PC-3 (cell line): ENCODE measurements at regions of chr11 and their contacts with region 1.

Region 1: GRCh38 chr11:34174412-34175041 is 69.1 kb downstream of the NAT10 start:
- DNase-seq: peak; percentile 76
- ATAC-seq: peak; percentile 100
- H3K4me3 ChIP-seq: peak overlapping the region; percentile 58; the same call in 1 of the 2 replicates
- H3K27ac ChIP-seq: no peak overlapping the region
- H3K4me1 ChIP-seq: peaks cover 11% of the 10 kb centered on the region; the same call in 1 of the 2 replicates
- H3K27me3 ChIP-seq: no peaks in the 10 kb centered on the region
- CTCF ChIP-seq: peak; percentile 79

Region 2: DNA sequence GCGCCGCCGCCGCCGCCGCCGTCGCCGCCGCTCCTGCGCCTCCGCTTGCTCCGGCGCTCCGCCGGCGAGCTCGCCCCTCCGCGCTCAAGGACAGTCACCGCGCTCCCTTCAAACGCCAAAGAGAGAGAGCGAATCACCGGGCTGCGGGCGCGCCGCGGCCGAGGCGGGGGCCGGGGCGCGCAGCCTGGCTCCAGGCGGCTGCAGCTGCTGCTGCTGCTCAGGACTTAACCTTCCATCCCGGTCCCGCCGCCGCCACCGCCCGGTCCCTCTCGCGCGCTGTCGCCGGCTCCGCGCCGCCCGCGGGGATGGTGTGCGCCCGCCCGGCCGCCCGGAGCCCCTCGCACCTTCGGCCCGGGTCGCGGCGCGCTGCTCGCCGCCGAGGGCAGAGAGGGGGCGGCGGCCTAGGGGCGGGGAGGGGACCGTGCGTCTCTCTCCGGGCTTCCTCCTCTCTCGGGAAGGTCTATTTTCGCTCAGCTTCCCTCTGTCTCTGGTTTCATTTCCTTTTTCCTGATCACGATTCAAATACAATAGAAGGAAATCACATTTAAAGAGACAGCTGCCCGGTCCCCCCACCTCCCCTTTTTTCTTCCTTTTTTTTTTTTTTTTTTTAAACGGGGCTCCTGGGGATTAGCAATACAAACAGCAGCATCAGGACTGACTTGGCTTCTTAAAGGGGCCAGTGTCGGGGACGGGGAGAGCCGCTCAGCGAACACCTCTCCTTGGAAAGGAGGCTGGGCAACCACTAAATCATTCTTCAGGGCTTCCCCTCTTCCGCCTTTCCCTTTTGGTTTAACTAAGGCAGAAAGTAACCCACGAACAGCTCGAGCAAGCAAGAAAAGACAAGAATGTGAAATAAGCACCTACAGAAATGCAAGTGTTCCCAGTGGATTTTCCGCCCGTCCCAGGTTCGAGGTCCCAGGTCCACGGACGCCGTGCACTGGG is 304.8 kb before region 1 on chr11:
- CTCF ChIA-PET with region 1: no interaction called
- POLR2A ChIA-PET with region 1: no interaction called
- intact Hi-C with region 1: no loop called
- DNase-seq: peak; percentile 21
- ATAC-seq: peak; percentile 71
- H3K4me3 ChIP-seq: peak overlapping the region; percentile 77
- H3K27ac ChIP-seq: no peak overlapping the region
- H3K4me1 ChIP-seq: no peaks in the 10 kb centered on the region
- H3K27me3 ChIP-seq: peaks cover 70% of the 10 kb centered on the region
- CTCF ChIP-seq: no peak

Region 3: GRCh38 chr11:34134765-34135164 is 39.8 kb before region 1 on chr11:
- CTCF ChIA-PET with region 1: no interaction called
- POLR2A ChIA-PET with region 1: no interaction called
- intact Hi-C with region 1: no loop called
- DNase-seq: no peak
- ATAC-seq: no peak
- H3K4me3 ChIP-seq: no peak overlapping the region
- H3K27ac ChIP-seq: no peak overlapping the region
- H3K4me1 ChIP-seq: no peaks in the 10 kb centered on the region
- H3K27me3 ChIP-seq: no peaks in the 10 kb centered on the region
- CTCF ChIP-seq: no peak

Region 4: DNA sequence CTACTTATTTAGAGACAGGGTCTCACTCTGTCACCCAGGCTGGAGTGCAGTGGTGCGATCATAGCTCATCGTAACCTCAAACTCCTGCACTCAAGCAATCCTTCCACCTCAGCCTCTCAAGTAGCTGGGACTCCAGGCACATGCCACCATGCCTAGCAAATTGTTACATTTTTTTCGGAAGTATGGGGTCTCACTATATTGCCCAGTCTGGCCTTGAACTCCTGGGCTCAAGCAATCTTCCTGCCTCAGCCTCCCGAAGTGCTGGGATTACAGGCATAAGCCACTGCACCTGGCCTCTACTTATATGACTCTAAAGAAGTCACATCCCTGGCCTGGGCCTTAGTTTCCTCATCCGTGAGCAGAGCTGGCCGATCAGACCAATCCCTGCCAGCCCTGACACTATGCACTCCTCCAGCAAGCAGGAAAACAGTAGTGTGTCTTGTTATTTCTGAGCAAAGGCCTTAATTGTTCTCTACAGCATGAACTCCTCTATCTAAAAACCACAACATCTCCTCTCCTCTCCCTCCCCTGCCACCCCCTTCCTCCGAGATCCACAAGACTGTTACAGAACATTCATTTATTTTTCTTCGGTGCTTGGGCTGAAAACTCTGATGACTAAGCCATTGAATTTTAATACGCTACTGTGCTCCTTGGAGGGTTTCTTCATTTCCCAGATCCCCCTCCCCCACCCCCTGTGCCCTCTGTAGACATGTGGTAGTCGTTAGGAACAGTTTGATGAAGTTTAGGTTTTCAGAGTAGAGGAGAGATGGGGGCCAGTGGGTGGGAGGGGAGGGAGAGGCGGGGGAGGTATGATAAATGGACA is 91.8 kb after region 1 on chr11:
- CTCF ChIA-PET with region 1: interaction called, 6 read pairs
- POLR2A ChIA-PET with region 1: no interaction called
- intact Hi-C with region 1: loop called (anchors 10 kb)
- DNase-seq: peak; percentile 78
- ATAC-seq: peak; percentile 64
- H3K4me3 ChIP-seq: no peak overlapping the region
- H3K27ac ChIP-seq: peak overlapping the region; percentile 70
- H3K4me1 ChIP-seq: peaks cover 46% of the 10 kb centered on the region
- H3K27me3 ChIP-seq: no peaks in the 10 kb centered on the region
- CTCF ChIP-seq: no peak

Region 5: DNA sequence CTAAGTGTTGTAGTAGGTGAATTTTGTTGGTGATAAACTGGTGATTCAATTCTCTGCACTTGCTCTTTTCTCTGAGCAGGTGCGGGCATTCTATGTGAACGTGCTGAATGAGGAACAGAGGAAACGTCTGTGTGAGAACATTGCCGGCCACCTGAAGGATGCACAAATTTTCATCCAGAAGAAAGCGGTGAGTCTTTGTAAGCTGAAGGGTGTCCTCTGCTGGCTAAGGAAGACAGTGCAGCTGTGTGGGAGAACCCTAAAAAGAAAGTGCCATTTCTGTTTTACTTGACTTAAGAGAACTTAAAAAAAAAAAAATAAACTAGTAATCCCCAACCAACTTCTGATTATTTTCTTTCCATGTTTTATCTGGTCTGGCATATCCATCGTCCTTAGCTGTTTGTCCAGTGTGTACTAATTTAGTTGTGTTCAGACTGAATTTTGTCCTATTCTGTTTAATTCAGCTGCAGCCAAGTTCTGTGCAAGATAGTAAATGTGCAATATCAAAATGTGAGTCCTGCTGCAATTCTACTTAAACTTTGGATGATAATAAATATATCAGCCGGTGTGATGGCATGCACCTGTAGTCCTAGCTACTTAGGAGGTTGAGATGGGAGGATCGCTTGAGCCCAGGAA is 293.8 kb after region 1 on chr11:
- CTCF ChIA-PET with region 1: interaction called, 3 read pairs
- POLR2A ChIA-PET with region 1: interaction called, 4 read pairs
- intact Hi-C with region 1: loop called (anchors 5 kb)
- DNase-seq: peak; percentile 81
- ATAC-seq: peak; percentile 74
- H3K4me3 ChIP-seq: no peak overlapping the region
- H3K27ac ChIP-seq: no peak overlapping the region
- H3K4me1 ChIP-seq: no peaks in the 10 kb centered on the region
- H3K27me3 ChIP-seq: no peaks in the 10 kb centered on the region
- CTCF ChIP-seq: peak; percentile 94

Region 6: GRCh38 chr11:34749666-34750659 is 575.4 kb after region 1 on chr11:
- CTCF ChIA-PET with region 1: no interaction called
- POLR2A ChIA-PET with region 1: interaction called, 14 read pairs
- intact Hi-C with region 1: no loop called
- DNase-seq: peak; percentile 91
- ATAC-seq: peak; percentile 94
- H3K4me3 ChIP-seq: peak overlapping the region; percentile 28; the same call in 1 of the 2 replicates
- H3K27ac ChIP-seq: peak overlapping the region; percentile 88
- H3K4me1 ChIP-seq: peaks cover 23% of the 10 kb centered on the region
- H3K27me3 ChIP-seq: no peaks in the 10 kb centered on the region
- CTCF ChIP-seq: no peak